ENCODE measurements at regions of chr2 and their contacts with region 1.

Region 1: GRCh38 chr2:138827426-138828054 is 47.4 kb upstream of the NXPH2 start:
- DNase-seq: peak; percentile 80
- H3K4me3 Mint-ChIP-seq: no peak overlapping the region
- H3K27ac Mint-ChIP-seq: no peak overlapping the region
- H3K4me1 Mint-ChIP-seq: no peaks in the 10 kb centered on the region
- H3K27me3 Mint-ChIP-seq: peaks cover 7% of the 10 kb centered on the region
- CTCF ChIP-seq: peak; percentile 49

Region 2: DNA sequence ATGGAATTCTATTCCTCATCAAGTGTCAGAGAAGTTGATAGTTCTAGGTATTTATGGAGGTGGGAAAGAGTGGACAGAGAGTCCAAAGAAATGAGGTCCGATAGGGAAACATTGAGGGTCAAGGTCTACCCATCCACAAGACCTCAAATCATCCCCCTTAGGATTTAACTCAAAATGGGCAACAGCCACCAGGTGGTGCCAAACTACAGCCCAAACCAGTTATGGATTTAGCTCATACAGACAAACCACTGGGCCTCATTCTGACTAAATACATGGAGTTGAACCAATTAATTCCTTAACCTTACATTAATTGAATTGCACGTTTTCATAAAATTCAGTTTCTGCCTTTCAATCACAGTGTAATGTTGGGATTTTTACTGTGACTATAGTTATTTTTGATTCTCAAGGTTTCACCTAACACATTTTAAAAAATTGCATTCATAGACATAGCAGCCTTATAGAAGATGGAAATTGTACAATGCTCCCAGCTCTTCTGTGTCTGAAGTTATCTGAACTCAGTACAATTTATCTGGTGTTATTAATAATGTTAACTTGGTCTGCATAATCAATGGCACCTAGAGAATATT is 961.5 kb before region 1 on chr2:
- CTCF ChIA-PET with region 1: interaction called, 41 read pairs
- POLR2A ChIA-PET with region 1: no interaction called
- intact Hi-C with region 1: loop called (anchors 1 kb)
- DNase-seq: peak; percentile 66
- H3K4me3 Mint-ChIP-seq: no peak overlapping the region
- H3K27ac Mint-ChIP-seq: no peak overlapping the region
- H3K4me1 Mint-ChIP-seq: no peaks in the 10 kb centered on the region
- H3K27me3 Mint-ChIP-seq: peaks cover 21% of the 10 kb centered on the region
- CTCF ChIP-seq: peak; percentile 70

Region 3: DNA sequence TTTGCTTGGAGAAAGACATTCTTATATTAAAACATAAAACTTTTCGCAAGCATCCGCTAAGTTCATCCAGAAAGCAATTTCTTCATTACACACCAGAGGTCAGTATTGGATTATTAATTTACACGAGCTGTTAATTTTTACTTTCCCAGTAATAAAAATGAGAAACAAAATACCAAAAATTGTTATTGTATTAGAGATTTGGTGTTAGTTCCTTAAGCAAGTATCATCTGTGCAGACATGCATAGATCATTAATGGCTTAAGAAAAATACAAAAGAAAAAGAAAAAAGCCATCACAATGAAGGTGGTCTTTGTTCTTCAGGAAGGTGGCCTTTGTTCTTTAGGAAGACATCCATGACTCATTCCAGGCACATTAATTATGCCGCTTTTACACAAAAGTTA is 916.9 kb before region 1 on chr2:
- CTCF ChIA-PET with region 1: interaction called, 97 read pairs
- POLR2A ChIA-PET with region 1: interaction called, 3 read pairs
- intact Hi-C with region 1: loop called (anchors 1 kb)
- DNase-seq: peak; percentile 19
- H3K4me3 Mint-ChIP-seq: no peak overlapping the region
- H3K27ac Mint-ChIP-seq: no peak overlapping the region
- H3K4me1 Mint-ChIP-seq: no peaks in the 10 kb centered on the region
- H3K27me3 Mint-ChIP-seq: no peaks in the 10 kb centered on the region
- CTCF ChIP-seq: peak; percentile 63

Region 4: DNA sequence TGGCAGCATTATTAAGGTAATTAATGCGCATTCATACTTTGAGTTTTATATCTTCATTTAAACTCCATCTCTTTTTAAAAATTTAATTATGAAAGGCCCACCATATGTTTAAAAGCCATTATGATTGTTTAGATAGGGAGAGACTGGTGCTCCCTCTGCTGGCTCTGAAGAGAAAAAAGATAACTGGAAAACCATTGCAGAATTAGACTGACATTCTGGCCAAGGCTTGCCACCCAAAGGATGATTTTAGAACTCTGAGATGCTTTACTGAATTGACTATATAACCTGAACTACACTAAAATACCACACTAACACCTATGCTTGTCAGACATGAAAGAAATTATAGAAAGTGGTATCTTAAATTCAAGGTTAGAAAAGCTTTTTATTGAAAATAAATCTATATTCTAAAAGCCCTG is 453.5 kb before region 1 on chr2:
- CTCF ChIA-PET with region 1: interaction called, 10 read pairs
- POLR2A ChIA-PET with region 1: no interaction called
- intact Hi-C with region 1: loop called (anchors 1 kb)
- DNase-seq: peak; percentile 63
- H3K4me3 Mint-ChIP-seq: no peak overlapping the region
- H3K27ac Mint-ChIP-seq: no peak overlapping the region
- H3K4me1 Mint-ChIP-seq: no peaks in the 10 kb centered on the region
- H3K27me3 Mint-ChIP-seq: no peaks in the 10 kb centered on the region
- CTCF ChIP-seq: peak; percentile 59

Region 5: DNA sequence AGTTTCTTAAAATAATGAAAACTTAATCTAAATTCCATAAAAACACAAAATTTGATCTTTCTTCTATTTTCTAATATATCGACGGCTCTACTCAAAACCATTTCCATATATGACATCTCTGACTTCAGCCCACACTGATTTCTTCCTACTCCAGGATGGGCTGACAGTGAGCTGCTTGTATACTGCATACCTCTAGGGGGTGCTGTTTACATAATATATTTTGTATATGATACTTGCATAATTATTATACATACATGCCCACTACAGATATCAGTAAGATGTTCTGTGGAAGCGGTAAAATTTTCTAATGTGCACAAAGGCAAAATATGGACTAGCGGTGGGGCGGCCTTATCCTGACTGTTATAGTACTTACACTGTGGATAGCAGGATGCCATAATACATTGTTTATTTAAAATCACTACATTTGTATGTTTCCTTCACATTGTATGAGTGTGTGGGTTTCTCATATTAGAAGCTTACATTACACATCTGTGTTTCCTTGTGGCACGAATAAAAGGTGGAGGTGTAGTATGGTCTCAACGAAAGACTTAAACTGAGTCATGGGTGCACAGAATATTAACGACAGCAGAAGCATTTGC is 18.8 kb after region 1 on chr2:
- CTCF ChIA-PET with region 1: interaction called, 13 read pairs
- POLR2A ChIA-PET with region 1: no interaction called
- intact Hi-C with region 1: no loop called
- DNase-seq: peak; percentile 51
- H3K4me3 Mint-ChIP-seq: no peak overlapping the region
- H3K27ac Mint-ChIP-seq: no peak overlapping the region
- H3K4me1 Mint-ChIP-seq: no peaks in the 10 kb centered on the region
- H3K27me3 Mint-ChIP-seq: peaks cover 10% of the 10 kb centered on the region
- CTCF ChIP-seq: peak; percentile 45